Activated T-helper 1 cell treated with anti-CD3 and anti-CD28 coated beads, Interleukin-12 subunit alpha, Interleukin-12 subunit beta, Interleukin-2, Interleukin-4 antibody, amounts not matched to agents 30 ng/mL and 10 ng/mL and 1 ng/mL, durations not matched to agents 14 hours and 24 hours and 36 hours (primary cell): ENCODE measurements at regions of chr21 and their contacts with region 1.

Region 1: GRCh38 chr21:36695671-36696389 is 3.1 kb upstream of the SIM2 start:
- DNase-seq: no peak
- H3K4me3 Mint-ChIP-seq: no peak overlapping the region
- H3K27ac Mint-ChIP-seq: no peak overlapping the region
- H3K4me1 Mint-ChIP-seq: peaks cover 5% of the 10 kb centered on the region
- H3K27me3 Mint-ChIP-seq: peaks cover 62% of the 10 kb centered on the region

Region 2: DNA sequence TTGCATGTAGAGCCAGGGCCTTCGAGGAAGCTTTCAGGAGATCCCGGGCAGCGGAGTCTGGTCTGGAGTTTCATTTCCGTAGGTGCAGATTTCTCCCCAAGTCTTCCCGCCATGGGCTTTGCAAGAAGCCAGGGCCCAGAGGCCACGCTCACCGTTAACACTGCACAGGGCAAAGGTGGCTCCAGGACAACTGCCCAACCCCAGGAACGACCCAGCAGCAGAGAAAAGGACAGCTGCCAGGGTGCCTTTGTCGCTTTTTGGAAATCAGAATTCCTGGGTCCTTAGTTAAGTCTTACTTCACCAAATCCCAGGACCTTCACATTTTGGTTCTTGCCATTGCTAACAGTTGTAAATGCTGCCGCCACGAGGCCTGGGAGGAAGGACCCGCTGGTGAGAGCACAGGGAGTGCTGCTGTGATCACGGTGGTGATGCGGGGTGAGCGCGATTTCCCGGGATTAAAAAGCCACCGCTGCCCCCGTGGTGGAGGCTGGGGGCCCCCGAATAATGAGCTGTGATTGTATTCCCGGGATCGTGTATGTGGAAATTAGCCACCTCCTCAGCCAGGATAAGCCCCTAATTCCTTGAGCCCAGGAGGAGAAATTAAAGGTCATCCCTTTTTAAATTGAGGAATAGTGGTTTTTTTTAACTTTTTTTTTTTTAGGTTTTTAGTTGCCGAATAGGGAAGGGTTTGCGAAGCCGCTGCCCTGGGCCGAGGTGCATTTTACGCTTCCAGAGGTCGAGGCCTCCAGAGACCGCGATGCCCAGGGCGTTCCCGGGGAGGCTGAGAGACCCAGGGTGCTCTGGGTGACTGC is 11.3 kb after region 1 on chr21:
- intact Hi-C with region 1: loop called (anchors 1 kb)
- DNase-seq: no peak
- H3K4me3 Mint-ChIP-seq: no peak overlapping the region
- H3K27ac Mint-ChIP-seq: peak overlapping the region; percentile 36
- H3K4me1 Mint-ChIP-seq: no peaks in the 10 kb centered on the region
- H3K27me3 Mint-ChIP-seq: peaks cover 75% of the 10 kb centered on the region

Region 3: DNA sequence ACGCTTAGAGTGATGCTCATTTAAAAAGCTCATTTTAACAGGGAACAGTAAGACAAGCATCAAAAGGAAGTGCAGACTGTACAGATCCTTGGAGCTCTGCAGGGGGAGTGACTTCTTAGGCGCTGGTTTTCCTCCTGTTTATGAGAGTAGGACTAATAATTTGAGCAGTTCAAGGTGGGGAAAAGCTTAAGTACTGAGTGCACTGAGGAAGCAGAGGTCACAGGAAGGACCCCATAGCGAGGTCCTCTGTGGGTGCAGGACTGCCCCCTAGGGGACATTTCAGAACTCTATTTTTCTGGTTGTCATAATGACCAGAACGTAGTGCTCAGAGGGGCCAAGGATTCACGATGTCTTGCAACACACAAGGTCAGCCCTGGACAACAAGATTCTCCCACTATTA is 158.6 kb after region 1 on chr21:
- intact Hi-C with region 1: no loop called
- DNase-seq: no peak
- H3K4me3 Mint-ChIP-seq: no peak overlapping the region
- H3K27ac Mint-ChIP-seq: no peak overlapping the region
- H3K4me1 Mint-ChIP-seq: peaks cover 12% of the 10 kb centered on the region
- H3K27me3 Mint-ChIP-seq: no peaks in the 10 kb centered on the region